PC-3 (cell line): ENCODE measurements at regions of chr10 and their contacts with region 1.

Region 1: GRCh38 chr10:29841724-29842649 is 207.2 kb upstream of the SVIL start:
- DNase-seq: peak; percentile 37
- ATAC-seq: peak; percentile 65
- H3K4me3 ChIP-seq: no peak overlapping the region
- H3K27ac ChIP-seq: no peak overlapping the region
- H3K4me1 ChIP-seq: no peaks in the 10 kb centered on the region
- H3K27me3 ChIP-seq: no peaks in the 10 kb centered on the region
- CTCF ChIP-seq: no peak

Region 2: DNA sequence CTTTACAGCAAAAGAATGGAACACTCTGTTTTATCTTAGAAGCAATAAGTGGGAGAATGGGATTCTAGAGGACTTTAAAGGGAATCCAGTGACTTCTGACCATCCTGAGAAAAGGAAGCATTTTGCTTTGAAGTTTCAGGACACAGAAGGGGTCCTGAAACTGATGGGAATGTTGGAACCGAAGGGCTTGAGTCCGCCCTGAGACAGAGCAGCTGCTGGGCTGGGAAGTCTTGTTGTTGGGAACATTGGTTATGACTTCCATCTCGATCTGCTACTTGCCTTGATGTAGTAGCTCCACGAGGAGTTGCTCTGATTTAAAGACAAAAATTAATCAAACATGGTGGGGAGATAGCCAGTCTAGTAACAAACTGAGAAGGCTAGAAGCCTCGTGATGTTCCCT is 39.8 kb after region 1 on chr10:
- CTCF ChIA-PET with region 1: no interaction called
- POLR2A ChIA-PET with region 1: no interaction called
- intact Hi-C with region 1: loop called (anchors 2 kb)
- DNase-seq: no peak
- ATAC-seq: no peak
- H3K4me3 ChIP-seq: no peak overlapping the region
- H3K27ac ChIP-seq: no peak overlapping the region
- H3K4me1 ChIP-seq: no peaks in the 10 kb centered on the region
- H3K27me3 ChIP-seq: no peaks in the 10 kb centered on the region
- CTCF ChIP-seq: no peak